ENCODE measurements at regions of chr2 and their contacts with region 1.

Region 1: DNA sequence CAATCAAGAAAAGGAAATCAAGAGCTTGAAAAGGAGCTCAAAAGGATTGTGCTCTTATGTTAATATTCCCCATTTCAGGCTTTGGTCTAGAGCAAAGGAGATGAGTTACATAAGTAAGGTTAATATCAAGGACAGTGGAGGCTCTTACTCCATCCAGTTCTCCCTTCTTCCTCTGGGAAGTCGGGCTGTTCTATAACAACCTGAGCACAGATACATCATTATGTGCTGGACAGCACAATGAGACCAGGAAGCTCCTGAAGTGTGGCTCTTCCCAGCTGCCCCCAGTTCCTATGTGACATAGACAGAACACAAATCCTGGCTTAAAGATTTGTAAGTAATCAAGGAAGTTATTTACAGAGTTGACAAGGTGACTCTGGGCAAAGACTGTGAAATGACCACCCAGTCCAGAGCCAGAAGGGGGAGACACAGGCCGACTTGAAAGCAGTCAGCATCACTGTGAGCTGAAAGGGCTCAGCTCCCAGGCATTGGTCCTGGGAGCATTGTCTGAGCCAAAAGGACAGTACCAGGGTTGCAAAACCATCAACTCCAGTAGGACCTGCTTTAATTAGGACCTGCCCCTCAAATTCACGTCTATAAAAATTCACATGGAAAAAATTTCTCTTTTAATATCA is 917.6 kb upstream of the ACVR2A start:
- DNase-seq: peak; percentile 82
- H3K4me3 ChIP-seq: no peak overlapping the region
- H3K27ac ChIP-seq: no peak overlapping the region
- H3K4me1 ChIP-seq: peaks cover 9% of the 10 kb centered on the region; the same call in 1 of the 2 replicates
- H3K27me3 ChIP-seq: no peaks in the 10 kb centered on the region

Region 2: DNA sequence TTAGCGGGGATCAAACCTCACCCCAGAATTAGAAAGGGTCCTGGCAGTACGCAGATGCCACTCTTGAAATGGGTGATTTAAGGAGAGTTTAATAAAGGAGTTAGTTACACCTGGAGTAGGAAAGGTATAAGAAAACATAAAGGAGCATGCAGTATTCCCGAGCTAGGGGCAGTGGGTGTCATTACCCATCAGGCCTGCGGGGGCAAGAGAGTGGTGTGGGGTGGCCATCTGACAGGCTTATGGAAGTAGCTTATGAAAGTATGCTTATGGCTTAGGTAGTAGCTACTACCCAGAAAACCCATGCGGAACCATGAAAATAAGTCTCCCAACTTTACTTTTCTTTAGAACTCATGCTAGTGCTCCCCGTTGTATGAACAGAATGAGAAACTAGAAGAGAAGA is 348.7 kb after region 1 on chr2:
- in situ Hi-C with region 1: no loop called
- DNase-seq: peak; percentile 7
- H3K4me3 ChIP-seq: no peak overlapping the region
- H3K27ac ChIP-seq: no peak overlapping the region
- H3K4me1 ChIP-seq: 0 out of 2 replicates have a peak, but pooled peaks cover 3% of the 10 kb centered on the region
- H3K27me3 ChIP-seq: no peaks in the 10 kb centered on the region

Region 3: DNA sequence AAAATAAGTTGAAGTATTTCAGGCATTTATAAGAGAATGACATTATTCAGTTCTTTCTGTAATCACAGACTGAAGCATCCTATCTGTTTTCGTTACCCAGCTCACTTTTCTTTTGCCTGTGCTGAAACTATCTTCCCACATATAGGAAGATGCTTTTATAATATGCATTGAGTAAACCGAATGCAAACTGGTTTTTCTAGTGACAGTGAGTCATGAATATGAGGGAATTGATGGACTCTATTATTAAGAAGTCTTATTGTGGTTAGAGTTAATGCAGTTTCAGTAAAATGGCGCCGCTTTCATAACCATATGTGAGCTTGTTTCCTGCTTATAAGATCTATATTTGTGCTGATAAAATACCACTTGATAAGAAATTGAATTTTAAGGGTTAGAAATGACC is 976.8 kb after region 1 on chr2:
- in situ Hi-C with region 1: loop called (anchors 10 kb)
- DNase-seq: no peak
- H3K4me3 ChIP-seq: no peak overlapping the region
- H3K27ac ChIP-seq: no peak overlapping the region
- H3K4me1 ChIP-seq: no peaks in the 10 kb centered on the region
- H3K27me3 ChIP-seq: no peaks in the 10 kb centered on the region

Measured in GM23248 (cell line).